ENCODE measurements at regions of chr13 and their contacts with region 1.

Region 1: DNA sequence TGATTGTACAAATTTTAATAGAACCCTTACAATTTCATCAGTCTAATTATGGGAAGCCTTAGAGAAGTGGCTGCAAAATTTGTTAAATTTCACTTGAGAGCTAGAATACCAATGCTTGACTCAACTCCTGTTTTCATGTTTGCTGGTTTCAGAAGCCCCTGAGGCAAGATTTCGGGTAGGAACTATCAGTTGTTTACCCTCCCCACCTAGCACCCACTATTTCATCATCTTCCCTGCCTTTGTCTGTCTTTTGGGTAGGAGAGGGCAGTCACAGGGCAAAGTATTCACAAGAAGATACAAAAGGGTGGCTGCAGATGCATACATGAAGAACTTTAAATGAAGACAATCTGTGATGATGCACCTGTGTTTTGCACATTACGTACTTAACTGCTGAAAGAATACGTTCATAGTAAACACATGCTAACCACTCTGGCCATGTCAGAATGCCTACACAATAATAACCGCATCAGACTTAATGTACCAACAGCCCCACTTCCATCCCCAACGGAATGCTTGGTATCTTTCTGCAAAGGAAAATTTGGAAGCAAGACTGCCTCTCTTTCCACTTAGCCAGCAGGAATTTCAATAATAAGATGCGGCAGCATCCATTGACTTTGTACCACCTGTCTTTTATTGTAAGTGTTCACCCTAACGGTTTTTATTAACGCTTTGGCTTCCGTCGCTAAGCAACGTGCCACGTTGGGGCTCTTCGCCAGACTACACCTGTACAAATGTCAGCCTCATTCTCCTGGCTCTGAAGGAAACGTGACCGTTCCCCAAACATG is 30.4 kb downstream of the TPT1 start:
- DNase-seq: no peak
- H3K4me3 Mint-ChIP-seq: peak overlapping the region; percentile 78
- H3K27ac Mint-ChIP-seq: peak overlapping the region; percentile 44
- H3K4me1 Mint-ChIP-seq: peaks cover 18% of the 10 kb centered on the region
- H3K27me3 Mint-ChIP-seq: peaks cover 16% of the 10 kb centered on the region

Region 2: GRCh38 chr13:44867825-44868224 is 442.7 kb before region 1 on chr13:
- intact Hi-C with region 1: no loop called
- DNase-seq: no peak
- H3K4me3 Mint-ChIP-seq: no peak overlapping the region
- H3K27ac Mint-ChIP-seq: no peak overlapping the region
- H3K4me1 Mint-ChIP-seq: peaks cover 9% of the 10 kb centered on the region
- H3K27me3 Mint-ChIP-seq: peaks cover 7% of the 10 kb centered on the region

Region 3: DNA sequence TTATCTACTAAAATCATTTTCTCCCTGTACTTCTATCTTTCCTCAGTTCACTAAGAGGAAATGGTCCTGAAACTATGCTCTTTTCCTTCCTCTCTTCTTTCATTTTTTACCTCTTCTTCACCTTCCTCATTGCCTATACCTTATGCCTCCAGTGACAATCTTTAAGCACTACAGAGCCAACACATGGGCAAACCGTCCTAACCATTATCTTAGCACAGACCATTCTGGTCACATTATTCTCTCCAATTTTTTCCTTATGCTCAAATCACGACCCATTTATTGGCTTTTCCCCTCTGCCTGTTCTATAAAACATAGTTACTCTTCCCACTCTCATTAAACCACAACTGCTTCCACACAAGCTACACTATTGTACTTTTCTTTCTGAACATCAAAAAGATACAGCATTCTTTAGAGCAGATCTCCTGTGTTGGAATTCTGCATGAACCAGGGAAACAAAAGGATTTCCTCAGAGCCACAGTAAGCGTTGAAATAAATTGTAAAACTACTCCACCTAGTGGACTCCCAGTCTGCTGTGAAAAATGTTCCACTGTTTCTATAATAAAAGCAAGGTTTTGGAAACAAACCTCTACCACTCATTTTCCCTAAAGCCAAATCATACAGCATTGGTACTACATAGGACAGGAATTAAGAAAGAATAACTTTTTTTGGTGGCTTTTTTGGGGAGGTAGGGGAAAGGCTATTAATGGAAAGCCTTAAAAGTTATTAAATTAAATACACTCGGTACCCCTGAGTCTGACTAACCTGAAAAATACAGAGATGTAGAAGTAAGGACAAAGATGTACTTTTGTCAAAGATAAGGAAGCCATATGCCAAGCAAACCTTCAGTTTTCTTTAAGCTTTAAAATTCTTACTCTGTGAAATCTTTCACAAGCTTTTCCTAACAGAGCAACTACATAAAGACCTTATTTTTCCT is 340.7 kb before region 1 on chr13:
- intact Hi-C with region 1: loop called (anchors 5 kb)
- DNase-seq: no peak
- H3K4me3 Mint-ChIP-seq: no peak overlapping the region
- H3K27ac Mint-ChIP-seq: no peak overlapping the region
- H3K4me1 Mint-ChIP-seq: no peaks in the 10 kb centered on the region
- H3K27me3 Mint-ChIP-seq: no peaks in the 10 kb centered on the region

Region 4: DNA sequence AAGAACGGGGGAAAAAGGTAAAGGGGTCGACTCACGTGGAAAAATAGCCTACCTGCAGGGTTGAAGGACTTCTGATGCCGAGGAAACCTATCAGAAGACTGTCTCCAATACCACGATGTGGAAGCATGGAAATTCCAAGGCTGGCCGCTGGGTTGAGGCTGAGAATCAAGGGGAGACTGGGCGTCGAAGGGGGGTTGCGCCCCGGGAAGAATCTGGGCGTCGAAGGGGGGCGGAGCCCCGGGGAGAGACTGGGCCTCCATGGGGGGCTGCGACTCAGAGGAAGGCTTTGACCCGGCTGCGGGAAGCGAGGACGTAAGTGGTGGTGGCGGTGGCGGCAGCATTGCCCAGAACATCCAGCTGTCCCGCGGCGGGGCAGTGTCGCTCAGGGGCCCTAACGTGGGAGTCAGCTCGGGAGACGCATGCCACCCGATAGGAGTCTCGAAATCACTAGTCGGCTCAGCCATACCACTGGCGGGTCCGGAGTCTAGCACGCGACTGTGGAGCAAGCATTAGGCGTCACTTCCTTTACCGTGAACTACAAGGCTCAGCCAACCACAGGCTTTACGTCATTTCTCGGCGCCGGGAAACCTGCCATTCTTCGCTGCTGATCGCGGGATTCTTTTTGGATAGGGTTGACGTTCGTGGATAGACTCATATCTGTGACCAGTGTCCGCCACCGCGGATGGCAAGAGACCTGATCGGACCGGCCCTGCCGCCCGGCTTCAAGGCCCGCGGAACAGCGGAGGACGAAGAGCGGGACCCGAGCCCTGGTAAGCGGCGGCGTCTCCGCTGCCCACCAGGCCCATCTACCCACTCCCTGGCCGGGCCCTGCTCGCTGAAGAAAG is 321.3 kb before region 1 on chr13 and contains the starts of genes GPALPP1 and NUFIP1:
- intact Hi-C with region 1: loop called (anchors 2 kb)
- DNase-seq: peak; percentile 90
- H3K4me3 Mint-ChIP-seq: peak within 1 kb of the TSS; percentile 91
- H3K27ac Mint-ChIP-seq: peak within 1 kb of the TSS; percentile 91
- H3K4me1 Mint-ChIP-seq: peaks cover 43% of the 10 kb centered on the region
- H3K27me3 Mint-ChIP-seq: no peaks in the 10 kb centered on the region
- total RNA-seq, gene GPALPP1: 29.8 and 33.5 TPM in 2 replicates
- total RNA-seq, gene NUFIP1: 12.2 and 13.5 TPM in 2 replicates

Region 5: DNA sequence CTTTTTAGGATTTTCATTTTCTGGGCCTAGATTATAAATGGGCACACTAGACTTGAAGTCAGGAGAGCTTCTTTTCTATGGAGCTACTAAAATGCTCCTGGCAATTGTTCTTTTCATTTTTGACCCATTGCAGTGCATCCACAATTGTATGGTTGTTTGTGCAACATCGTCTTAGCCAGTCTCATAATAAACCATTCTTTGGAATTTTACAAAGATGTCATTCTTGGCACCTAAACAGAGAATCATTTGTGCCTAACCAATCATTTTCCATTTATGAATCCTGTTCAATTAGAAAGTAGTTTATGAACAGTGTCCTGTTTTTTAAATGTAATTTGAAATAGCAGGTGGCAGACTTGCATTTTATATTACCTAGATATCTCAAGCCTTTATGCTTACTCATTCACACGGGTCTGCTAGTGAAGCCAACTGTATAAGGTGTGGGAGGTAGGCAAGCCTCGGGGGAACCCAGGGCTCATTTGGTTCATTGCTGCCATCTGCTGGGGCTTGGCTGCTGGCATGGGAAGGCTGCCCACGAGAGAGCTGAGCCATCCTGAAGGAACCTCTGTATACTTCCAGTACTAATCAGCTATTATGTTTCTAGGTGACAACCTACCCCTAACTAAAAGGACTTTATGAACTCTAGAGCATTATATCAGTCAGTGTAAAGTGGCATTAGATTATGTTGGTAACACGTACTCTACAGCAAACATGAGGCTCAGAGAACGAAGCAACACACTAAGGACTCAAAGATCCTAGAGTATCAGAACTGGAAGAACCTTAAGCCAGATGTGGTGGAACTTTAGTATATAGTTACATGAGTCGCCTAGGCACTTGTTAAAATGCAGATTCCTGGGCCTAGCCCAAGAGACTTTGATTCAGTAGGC is 29.5 kb before region 1 on chr13:
- intact Hi-C with region 1: loop called (anchors 2 kb)
- DNase-seq: peak; percentile 3
- H3K4me3 Mint-ChIP-seq: no peak overlapping the region
- H3K27ac Mint-ChIP-seq: no peak overlapping the region
- H3K4me1 Mint-ChIP-seq: peaks cover 15% of the 10 kb centered on the region
- H3K27me3 Mint-ChIP-seq: no peaks in the 10 kb centered on the region